Heart right ventricle (tissue), 16 donors: ENCODE measurements at regions of chrX and their contacts with region 1.

Region 1: DNA sequence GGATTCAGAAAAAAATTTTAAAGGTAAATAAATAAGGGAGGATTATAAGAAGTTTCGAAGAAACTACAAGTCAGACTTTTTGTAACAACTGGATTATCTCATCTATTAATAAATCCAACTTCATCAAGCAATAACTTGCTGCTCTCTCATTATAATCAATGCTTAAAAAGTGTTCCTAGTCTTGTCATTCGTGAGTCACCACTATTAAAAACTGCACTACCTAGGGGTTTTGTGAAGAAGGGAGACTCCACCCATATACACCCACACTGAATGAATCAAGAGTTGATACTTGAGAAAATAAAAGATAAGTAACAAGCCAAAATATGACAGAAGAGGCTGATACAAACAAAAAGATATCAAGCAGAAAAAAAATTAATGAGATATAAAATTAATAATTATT is 360.5 kb downstream of the ZNF674 start:
- DNase-seq: no peak
- ATAC-seq: no peak
- H3K4me3 ChIP-seq: no peak overlapping the region
- H3K27ac ChIP-seq: no peak overlapping the region
- H3K4me1 ChIP-seq: no peaks in the 10 kb centered on the region
- H3K27me3 ChIP-seq: peaks cover 0 to 14% (median 0%) of the 10 kb centered on the region in 7 donors
- CTCF ChIP-seq: no peak

Region 2: GRCh38 chrX:46244451-46244850 is 59.7 kb after region 1 on chrX:
- intact Hi-C with region 1: loop called in 1 of 10 experiments (anchors 5 kb)
- DNase-seq: no peak
- ATAC-seq: no peak
- H3K4me3 ChIP-seq: no peak overlapping the region
- H3K27ac ChIP-seq: no peak overlapping the region
- H3K4me1 ChIP-seq: no peaks in the 10 kb centered on the region
- H3K27me3 ChIP-seq: peaks cover 0 to 10% (median 0%) of the 10 kb centered on the region in 7 donors
- CTCF ChIP-seq: no peak